Activated CD4-positive, alpha-beta memory T cell treated with anti-CD3 and anti-CD28 coated beads, Interleukin-2, amount 10 ng/mL, durations not matched to agents 7 days and 5 days (primary cell): ENCODE measurements at regions of chr3 and their contacts with region 1.

Region 1: DNA sequence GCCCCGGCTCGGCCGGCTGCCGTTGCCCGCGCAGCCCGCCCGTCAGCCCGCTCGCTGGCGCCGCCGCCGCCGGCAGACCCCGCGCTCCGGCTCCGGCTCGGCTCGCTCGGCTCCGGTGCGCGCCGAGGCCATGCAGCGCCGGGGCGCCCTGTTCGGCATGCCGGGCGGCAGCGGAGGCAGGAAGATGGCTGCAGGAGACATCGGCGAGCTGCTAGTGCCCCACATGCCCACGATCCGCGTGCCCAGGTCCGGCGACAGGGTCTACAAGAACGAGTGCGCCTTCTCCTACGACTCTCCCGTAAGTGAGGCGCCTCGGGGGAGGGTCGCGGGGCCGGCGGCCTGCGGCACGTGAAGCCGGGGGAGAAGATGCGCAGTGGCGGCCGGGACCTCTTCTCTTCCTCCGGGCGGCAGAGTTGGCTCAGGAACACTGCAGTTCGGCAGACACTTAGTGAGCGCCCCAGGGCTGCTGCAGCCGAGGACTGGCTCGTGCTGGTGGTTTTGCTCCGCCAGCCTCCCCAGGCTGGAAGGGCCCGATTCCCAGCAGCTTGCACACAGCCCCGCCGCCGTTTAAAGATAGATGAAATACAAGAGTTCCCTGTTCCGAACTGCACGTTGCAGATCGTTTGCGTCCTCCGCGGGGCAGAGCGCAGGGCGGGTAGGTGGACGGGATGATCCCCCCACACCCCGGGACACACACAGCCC is 407 bp downstream of the USP13 start:
- DNase-seq: peak; percentile 68
- H3K4me3 Mint-ChIP-seq: peak overlapping the region; percentile 96
- H3K27ac Mint-ChIP-seq: peak overlapping the region; percentile 85
- H3K4me1 Mint-ChIP-seq: peaks cover 35% of the 10 kb centered on the region
- H3K27me3 Mint-ChIP-seq: peaks cover 16% of the 10 kb centered on the region

Region 2: DNA sequence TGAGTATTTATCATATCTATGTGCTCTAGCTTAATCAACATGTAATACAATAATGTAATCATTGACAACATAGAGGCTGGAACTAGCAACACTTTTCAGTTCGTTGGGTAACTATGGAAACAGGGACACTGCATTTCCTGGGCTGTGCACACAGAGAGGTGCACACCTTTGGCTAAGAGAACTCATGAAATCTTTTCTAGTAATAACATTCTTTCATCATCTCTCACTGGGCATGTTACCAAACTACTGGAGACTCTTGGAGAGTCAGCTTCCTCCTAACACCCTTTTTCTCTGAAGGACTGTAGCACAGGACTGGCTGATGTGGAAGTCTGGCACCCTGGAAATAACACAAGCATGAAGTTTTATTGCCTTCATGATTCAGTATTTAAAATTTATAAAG is 981.5 kb before region 1 on chr3:
- CTCF ChIA-PET with region 1: no interaction called
- POLR2A ChIA-PET with region 1: no interaction called
- DNase-seq: no peak
- H3K4me3 Mint-ChIP-seq: no peak overlapping the region
- H3K27ac Mint-ChIP-seq: no peak overlapping the region
- H3K4me1 Mint-ChIP-seq: peaks cover 3% of the 10 kb centered on the region
- H3K27me3 Mint-ChIP-seq: no peaks in the 10 kb centered on the region

Region 3: DNA sequence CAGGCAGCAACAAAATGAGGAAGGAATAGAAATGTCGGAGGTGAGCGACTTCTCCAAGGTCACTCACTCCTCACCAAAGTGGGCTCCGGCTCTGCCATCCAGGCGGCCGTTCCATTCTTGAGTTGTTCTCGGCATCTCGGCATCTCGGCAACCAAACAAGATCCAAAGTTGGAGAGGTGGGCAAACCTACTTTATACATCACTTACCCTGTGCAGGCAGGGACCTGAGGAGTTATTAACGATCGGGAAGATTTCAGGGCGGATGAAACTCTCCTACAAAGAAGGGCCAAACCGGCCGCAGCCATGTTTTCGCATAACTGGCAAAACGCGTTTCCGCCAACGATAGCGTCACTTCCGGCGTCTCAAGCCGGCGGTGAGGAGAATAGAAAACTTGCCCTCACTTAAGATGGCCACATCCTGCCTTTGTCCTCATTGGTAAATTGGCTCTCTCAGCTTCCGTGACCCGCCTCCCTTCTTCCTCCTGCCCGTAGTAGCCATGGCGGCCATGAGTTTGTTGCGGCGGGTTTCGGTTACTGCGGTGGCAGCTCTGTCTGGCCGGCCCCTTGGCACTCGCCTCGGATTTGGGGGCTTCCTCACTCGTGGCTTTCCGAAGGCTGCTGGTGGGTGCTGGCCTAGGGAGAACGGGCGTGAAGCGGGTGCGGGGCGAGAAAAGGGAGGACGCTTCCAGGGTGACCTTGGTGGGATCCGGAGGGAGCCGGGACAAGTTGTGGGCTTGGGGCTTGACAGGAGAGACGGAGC is 48.7 kb before region 1 on chr3 and contains the starts of genes MRPL47 and NDUFB5:
- CTCF ChIA-PET with region 1: interaction called, 11 read pairs
- POLR2A ChIA-PET with region 1: interaction called, 20 read pairs
- DNase-seq: peak; percentile 94
- H3K4me3 Mint-ChIP-seq: peak within 1 kb of the TSS; percentile 99
- H3K27ac Mint-ChIP-seq: peak within 1 kb of the TSS; percentile 96
- H3K4me1 Mint-ChIP-seq: peaks cover 59% of the 10 kb centered on the region
- H3K27me3 Mint-ChIP-seq: no peaks in the 10 kb centered on the region
- total RNA-seq, gene MRPL47: 34.8 to 36.0 TPM
- total RNA-seq, gene NDUFB5: 102 to 110 TPM

Region 4: DNA sequence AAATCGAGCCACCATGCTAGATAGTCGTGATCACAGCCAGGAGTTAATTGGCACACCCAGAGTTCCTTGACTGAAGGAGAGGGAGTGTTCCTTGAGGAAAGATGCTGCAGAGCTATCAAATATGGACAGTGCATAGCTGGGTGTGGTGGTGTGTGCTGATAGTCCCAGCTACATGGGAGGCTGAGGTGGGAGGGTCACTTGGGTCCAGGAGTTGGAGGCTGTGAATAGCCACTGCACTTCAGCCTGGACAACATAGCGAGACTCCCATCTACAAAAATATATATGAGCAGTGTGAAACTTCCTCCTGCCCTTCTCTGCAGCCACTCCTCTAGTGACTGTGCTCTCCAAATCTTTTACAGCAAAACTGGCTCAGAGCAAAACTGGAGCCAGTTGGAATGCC is 10.4 kb before region 1 on chr3:
- CTCF ChIA-PET with region 1: no interaction called
- POLR2A ChIA-PET with region 1: interaction called, 10 read pairs
- DNase-seq: no peak
- H3K4me3 Mint-ChIP-seq: no peak overlapping the region
- H3K27ac Mint-ChIP-seq: no peak overlapping the region
- H3K4me1 Mint-ChIP-seq: peaks cover 11% of the 10 kb centered on the region
- H3K27me3 Mint-ChIP-seq: no peaks in the 10 kb centered on the region

Region 5: DNA sequence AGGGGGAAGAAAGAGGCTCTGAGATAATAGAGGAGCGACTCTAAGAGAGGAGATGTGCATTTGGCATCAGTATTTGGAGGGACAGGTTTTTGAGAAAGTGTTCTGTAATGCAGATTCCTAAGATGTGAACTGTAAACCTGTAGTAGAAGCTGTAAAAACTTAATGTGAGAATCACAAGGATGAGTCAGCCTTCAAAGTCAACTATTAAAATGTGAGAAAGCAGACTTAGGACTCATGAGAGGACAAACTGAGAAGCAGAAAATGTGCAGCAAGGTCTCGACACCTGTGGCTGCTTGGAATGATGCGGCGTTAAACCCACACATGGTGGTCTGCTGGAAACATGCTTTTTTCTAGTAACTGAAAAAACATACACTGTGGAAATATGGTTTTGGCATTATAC is 35.6 kb after region 1 on chr3:
- CTCF ChIA-PET with region 1: no interaction called
- POLR2A ChIA-PET with region 1: no interaction called
- DNase-seq: no peak
- H3K4me3 Mint-ChIP-seq: no peak overlapping the region
- H3K27ac Mint-ChIP-seq: no peak overlapping the region
- H3K4me1 Mint-ChIP-seq: no peaks in the 10 kb centered on the region
- H3K27me3 Mint-ChIP-seq: no peaks in the 10 kb centered on the region